ENCODE measurements at regions of chr2 and their contacts with region 1.

Region 1: GRCh38 chr2:233449081-233449901 is 95.0 kb downstream of the DGKD start:
- DNase-seq: peak; percentile 50
- H3K4me3 ChIP-seq: no peak overlapping the region
- H3K27ac ChIP-seq: no peak overlapping the region
- H3K4me1 ChIP-seq: no peaks in the 10 kb centered on the region
- H3K27me3 ChIP-seq: no peaks in the 10 kb centered on the region
- CTCF ChIP-seq: peak; percentile 76 to 80
- POLR2A ChIP-seq: no peak

Region 2: DNA sequence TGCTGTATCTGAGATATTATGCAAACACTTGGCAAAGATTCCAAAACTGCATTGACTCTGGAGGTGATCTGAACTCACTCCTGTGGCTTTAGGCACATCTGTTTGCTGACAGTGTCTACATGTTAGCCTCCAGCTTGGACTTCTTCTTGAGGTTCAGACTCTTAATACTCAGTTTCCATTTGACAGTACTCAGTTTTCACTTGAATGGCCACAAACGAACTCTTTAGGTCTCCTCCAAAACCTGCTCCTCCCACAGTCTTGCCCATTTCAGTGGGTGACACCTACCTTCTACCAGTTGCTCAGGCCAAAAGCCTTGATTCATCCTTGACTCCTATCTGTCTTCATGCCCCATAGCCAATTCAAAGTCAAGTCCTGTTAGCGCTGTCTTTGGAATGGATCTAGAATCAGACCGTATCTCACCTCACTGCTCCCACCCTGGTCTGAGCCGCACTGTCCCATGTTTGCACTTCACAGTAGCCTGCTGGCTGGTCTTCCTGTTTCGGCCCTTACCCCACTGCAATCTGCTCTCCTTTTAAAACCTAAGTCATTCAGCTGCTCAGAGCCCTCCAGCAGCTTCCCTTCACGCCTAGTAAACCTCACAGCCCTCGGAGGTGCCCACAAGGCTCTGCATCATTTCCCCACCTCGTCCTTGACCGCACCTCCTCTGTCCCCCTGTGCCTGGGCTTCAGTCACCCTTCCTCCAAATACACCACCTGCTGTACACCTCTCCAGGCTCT is 187.3 kb before region 1 on chr2:
- CTCF ChIA-PET with region 1: no interaction called
- POLR2A ChIA-PET with region 1: no interaction called
- dilution Hi-C with region 1: no loop called
- intact Hi-C with region 1: no loop called
- DNase-seq: no peak
- H3K4me3 ChIP-seq: no peak overlapping the region
- H3K27ac ChIP-seq: no peak overlapping the region
- H3K4me1 ChIP-seq: no peaks in the 10 kb centered on the region
- H3K27me3 ChIP-seq: no peaks in the 10 kb centered on the region
- CTCF ChIP-seq: no peak
- POLR2A ChIP-seq: no peak

Region 3: DNA sequence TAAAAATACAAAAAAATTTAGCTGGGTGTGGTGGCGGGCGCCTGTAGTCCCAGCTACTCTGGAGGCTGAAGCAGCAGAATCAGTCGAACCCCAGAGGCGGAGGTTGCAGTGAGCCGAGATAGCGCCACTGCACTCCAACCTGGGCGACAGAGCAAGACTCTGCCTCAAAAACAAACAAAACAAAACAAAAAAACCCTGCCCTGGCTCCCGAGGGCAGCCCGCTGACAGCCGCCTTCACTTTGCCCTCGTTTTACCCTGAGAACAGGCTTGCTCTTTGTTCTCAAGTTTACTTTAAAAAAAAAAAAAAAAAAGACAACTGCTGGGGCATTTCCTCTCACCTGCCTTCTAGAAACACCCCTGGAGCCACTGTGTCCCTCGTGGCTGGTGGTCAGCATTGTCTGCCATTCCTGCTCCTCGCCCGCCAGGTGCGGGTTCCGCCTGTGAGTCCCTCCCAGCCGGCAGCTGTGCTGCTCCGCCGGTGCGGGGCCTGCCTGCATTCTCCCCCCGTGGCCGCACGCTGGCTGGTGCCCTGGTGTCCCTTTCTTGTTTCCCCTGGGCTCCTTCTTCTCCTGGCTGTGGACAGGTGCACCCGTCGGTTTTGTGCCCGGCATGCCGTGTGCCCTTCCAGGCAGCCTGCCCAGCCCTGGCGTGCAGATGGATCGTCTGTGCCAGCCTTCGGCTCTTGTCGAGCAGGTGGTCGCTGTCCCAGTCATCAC is 11.6 kb after region 1 on chr2:
- CTCF ChIA-PET with region 1: interaction called, 16 read pairs
- POLR2A ChIA-PET with region 1: no interaction called
- dilution Hi-C with region 1: no loop called
- intact Hi-C with region 1: no loop called
- DNase-seq: no peak
- H3K4me3 ChIP-seq: no peak overlapping the region
- H3K27ac ChIP-seq: no peak overlapping the region
- H3K4me1 ChIP-seq: no peaks in the 10 kb centered on the region
- H3K27me3 ChIP-seq: no peaks in the 10 kb centered on the region
- CTCF ChIP-seq: no peak
- POLR2A ChIP-seq: no peak

Region 4: GRCh38 chr2:233711312-233712008 is 262.2 kb after region 1 on chr2:
- CTCF ChIA-PET with region 1: interaction called, 74 read pairs
- POLR2A ChIA-PET with region 1: no interaction called
- dilution Hi-C with region 1: no loop called
- intact Hi-C with region 1: loop called (anchors 1 kb)
- DNase-seq: peak; percentile 66
- H3K4me3 ChIP-seq: no peak overlapping the region
- H3K27ac ChIP-seq: no peak overlapping the region
- H3K4me1 ChIP-seq: peaks cover 2% of the 10 kb centered on the region
- H3K27me3 ChIP-seq: peaks cover 0 to 2% of the 10 kb centered on the region in 2 experiments
- CTCF ChIP-seq: peak; percentile 89 to 90
- POLR2A ChIP-seq: no peak

Region 5: GRCh38 chr2:233832869-233833311 is 383.6 kb after region 1 on chr2:
- CTCF ChIA-PET with region 1: interaction called, 54 read pairs
- POLR2A ChIA-PET with region 1: no interaction called
- dilution Hi-C with region 1: no loop called
- intact Hi-C with region 1: loop called (anchors 1 kb)
- DNase-seq: peak; percentile 30
- H3K4me3 ChIP-seq: no peak overlapping the region
- H3K27ac ChIP-seq: no peak overlapping the region
- H3K4me1 ChIP-seq: no peaks in the 10 kb centered on the region
- H3K27me3 ChIP-seq: no peaks in the 10 kb centered on the region
- CTCF ChIP-seq: peak in 1 of 2 donors; percentile 42
- POLR2A ChIP-seq: no peak

Region 6: GRCh38 chr2:233928594-233929351 is 479.5 kb after region 1 on chr2:
- CTCF ChIA-PET with region 1: interaction called, 17 read pairs
- POLR2A ChIA-PET with region 1: no interaction called
- dilution Hi-C with region 1: no loop called
- intact Hi-C with region 1: no loop called
- DNase-seq: peak; percentile 39
- H3K4me3 ChIP-seq: no peak overlapping the region
- H3K27ac ChIP-seq: no peak overlapping the region
- H3K4me1 ChIP-seq: no peaks in the 10 kb centered on the region
- H3K27me3 ChIP-seq: peaks cover 0 to 2% of the 10 kb centered on the region in 2 experiments
- CTCF ChIP-seq: peak; percentile 59 to 62
- POLR2A ChIP-seq: no peak

Measured in endothelial cell of umbilical vein (primary cell).